WTC11 (cell line): ENCODE measurements at regions of chr16 and their contacts with region 1.

Region 1: GRCh38 chr16:19907161-19907992 is 22.7 kb upstream of the GPRC5B start:
- DNase-seq: peak; percentile 88
- ATAC-seq: peak; percentile 95
- H3K4me3 Mint-ChIP-seq: peak overlapping the region; percentile 12; the same call in 1 of the 2 replicates
- H3K27ac Mint-ChIP-seq: peak overlapping the region; percentile 66; the same call in 1 of the 2 replicates
- H3K4me1 Mint-ChIP-seq: peaks cover 15% of the 10 kb centered on the region
- H3K27me3 Mint-ChIP-seq: no peaks in the 10 kb centered on the region; the same call in 1 of the 2 replicates
- CTCF ChIP-seq: peak; percentile 92

Region 2: DNA sequence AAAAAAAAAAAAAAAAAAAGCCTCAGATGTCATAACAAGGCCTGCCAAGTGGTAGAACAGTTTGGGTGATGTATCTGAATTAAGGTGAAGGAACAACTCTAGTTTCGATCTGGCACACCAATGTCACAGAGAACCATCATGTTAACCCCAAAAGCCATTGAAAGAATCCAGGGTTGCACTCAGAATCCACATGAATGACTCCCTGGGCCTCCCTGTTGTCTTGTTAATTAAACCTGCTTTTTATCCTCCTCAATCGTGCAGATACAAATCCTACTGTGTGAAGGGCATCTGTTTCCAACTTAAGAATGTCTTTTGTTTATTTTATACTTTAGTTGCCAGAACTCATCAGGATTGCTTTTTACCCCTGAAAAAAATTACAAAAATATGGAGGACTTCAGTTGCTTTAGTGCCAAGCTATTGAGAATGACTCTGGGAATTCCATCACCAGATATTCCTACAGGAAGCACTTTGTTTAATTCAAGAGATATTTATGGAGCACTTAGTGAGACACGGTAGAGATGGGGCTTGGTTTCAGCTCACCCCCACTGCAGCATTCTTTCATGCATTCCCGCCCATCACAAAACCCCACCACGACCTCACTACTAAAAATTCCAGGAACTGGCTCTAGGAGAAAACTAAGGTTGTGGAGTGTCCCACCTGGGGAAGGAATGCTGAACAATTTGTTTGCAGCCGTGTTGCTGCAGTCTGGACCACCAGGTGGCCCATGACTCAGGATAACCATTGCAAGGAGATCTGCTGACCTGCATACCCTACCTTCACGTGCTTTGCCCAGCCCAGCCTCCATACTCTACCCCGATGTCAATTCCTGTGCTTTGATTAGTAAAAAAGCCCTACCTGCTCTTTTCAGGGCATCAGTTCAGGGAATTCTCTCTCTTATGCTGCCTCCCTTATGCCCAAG is 41.1 kb after region 1 on chr16:
- CTCF ChIA-PET with region 1: interaction called, 23 read pairs
- POLR2A ChIA-PET with region 1: no interaction called
- DNase-seq: peak; percentile 72
- ATAC-seq: peak; percentile 89
- H3K4me3 Mint-ChIP-seq: peak overlapping the region; percentile 13; the same call in 1 of the 2 replicates
- H3K27ac Mint-ChIP-seq: peak overlapping the region; percentile 98
- H3K4me1 Mint-ChIP-seq: peaks cover 49% of the 10 kb centered on the region
- H3K27me3 Mint-ChIP-seq: peaks cover 2% of the 10 kb centered on the region; the same call in 1 of the 2 replicates
- CTCF ChIP-seq: no peak

Region 3: GRCh38 chr16:20004932-20005331 is 97.6 kb after region 1 on chr16:
- CTCF ChIA-PET with region 1: interaction called, 52 read pairs
- POLR2A ChIA-PET with region 1: no interaction called
- DNase-seq: peak; percentile 23
- ATAC-seq: peak; percentile 96
- H3K4me3 Mint-ChIP-seq: no peak overlapping the region
- H3K27ac Mint-ChIP-seq: no peak overlapping the region
- H3K4me1 Mint-ChIP-seq: peaks cover 4% of the 10 kb centered on the region; the same call in 1 of the 2 replicates
- H3K27me3 Mint-ChIP-seq: no peaks in the 10 kb centered on the region
- CTCF ChIP-seq: peak; percentile 28; the same call in 1 of the 2 replicates

Region 4: DNA sequence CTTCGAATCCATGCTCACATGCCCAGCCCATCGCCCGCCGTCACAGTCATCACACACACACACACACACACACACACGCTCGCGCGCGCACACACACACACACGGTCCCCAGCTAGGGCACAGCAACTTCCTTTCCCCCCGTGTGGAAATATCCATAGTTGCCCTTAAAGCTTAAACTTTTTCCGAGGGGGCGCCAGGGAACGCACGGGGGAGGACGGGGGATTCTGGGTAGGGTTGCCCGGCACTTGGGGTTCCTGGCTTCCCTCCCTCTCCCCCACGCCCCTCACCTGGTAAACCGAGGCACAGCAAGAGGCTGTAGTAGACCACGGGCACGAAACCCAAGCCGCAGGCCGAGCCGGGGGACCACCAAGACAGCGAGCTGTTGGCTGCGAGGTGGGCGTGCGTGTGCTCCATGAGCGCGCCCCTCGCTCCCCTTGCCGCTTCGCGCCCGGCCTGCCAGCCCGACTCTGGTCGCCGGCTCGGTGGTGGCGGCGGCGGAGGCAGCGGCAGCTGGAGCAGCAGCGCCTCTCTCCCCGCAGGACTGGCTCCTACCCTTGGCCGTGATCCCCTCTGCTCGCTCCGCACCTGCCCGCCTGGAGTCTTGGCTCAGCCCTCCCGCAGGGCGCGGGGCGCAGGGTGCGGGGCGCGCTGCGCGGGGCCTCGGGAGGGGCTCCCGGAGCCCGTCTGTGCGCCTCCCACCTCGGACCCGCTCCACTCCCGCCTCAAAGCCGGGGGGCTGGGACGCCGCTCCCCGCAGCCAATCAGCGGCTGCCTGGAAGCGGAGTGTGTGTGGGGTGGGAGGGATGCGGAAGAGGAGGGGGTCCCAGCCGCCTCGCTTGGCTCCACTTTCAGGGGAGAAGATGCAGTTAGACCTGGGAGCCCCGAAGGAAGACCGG is 166.1 kb after region 1 on chr16 and contains the start of gene GPR139:
- CTCF ChIA-PET with region 1: interaction called, 24 read pairs
- POLR2A ChIA-PET with region 1: no interaction called
- DNase-seq: peak; percentile 64
- ATAC-seq: peak; percentile 83
- H3K4me3 Mint-ChIP-seq: peak within 1 kb of the TSS; percentile 67
- H3K27ac Mint-ChIP-seq: no peak within 1 kb of the TSS
- H3K4me1 Mint-ChIP-seq: peaks cover 33% of the 10 kb centered on the region
- H3K27me3 Mint-ChIP-seq: peaks cover 54% of the 10 kb centered on the region
- CTCF ChIP-seq: no peak
- total RNA-seq, gene GPR139: 0.48 to 0.55 TPM (median 0.55 TPM) in 3 replicates

Region 5: DNA sequence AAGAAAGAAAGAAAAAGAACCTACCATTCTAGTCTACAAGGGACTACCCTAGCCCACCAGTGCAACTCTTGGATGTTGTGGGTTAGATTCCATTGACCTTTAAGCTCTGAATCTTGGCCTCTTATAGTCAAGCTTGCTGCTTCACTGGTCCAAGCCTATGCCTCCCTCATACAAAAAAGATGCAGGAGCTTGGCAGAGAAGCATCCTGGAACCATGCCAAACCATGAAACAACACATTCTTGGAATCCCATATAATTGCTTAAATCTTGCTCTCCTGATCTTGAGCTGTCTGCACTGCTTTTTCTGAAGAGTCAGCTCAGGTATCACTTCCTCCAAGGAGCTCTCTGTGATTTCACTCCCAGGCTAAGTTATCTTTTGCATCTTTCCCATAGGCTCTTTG is 284.2 kb after region 1 on chr16:
- CTCF ChIA-PET with region 1: interaction called, 15 read pairs
- POLR2A ChIA-PET with region 1: no interaction called
- DNase-seq: no peak
- ATAC-seq: no peak
- H3K4me3 Mint-ChIP-seq: no peak overlapping the region
- H3K27ac Mint-ChIP-seq: no peak overlapping the region
- H3K4me1 Mint-ChIP-seq: no peaks in the 10 kb centered on the region
- H3K27me3 Mint-ChIP-seq: no peaks in the 10 kb centered on the region
- CTCF ChIP-seq: no peak

Region 6: DNA sequence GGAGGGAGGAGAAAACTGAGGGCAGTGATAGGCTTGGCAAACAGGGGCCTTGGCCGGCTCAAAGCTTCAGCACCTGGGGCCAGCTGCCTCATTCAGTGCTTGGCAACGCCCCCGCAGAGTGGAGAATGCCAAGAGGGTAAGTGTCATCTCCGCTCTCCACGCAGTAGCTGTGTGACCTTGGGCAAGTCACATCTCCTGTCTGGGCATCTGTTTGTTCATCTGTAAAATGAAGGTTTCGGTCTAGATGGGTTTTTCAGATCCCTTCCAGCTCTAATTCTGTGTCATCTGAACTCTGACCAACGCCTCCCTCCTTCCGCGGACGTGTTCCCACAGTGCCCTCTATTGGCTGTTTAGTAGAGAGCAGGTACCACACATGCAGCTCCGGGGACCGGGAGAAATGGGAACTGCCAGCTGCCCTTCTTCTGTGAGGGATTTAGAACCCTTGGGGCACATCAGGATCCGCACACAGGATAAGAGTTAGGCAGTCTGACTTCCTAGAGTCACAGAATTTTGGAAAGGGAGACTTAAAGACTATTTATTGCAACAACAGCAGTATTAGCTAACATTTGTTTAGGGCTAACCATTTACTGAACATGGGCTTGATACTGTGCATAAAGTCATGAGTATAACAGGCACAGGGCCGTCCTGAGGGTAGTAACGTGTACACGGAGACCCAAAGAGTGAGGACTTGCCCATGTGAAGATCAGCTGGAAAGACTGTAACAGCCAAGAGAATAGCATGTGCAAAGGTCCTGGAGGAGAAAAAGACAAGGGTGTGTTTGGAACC is 393.1 kb after region 1 on chr16:
- CTCF ChIA-PET with region 1: interaction called, 215 read pairs
- POLR2A ChIA-PET with region 1: interaction called, 7 read pairs
- DNase-seq: peak; percentile 64
- ATAC-seq: peak; percentile 97
- H3K4me3 Mint-ChIP-seq: no peak overlapping the region
- H3K27ac Mint-ChIP-seq: no peak overlapping the region
- H3K4me1 Mint-ChIP-seq: 0 out of 2 replicates have a peak, but pooled peaks cover 3% of the 10 kb centered on the region
- H3K27me3 Mint-ChIP-seq: no peaks in the 10 kb centered on the region
- CTCF ChIP-seq: peak; percentile 66